ENCODE measurements at regions of chr4 and their contacts with region 1.

Region 1: GRCh38 chr4:81442484-81443085 is 29.1 kb downstream of the RASGEF1B start:
- DNase-seq: peak; percentile 58
- ATAC-seq: peak; percentile 59
- H3K4me3 ChIP-seq: no peak overlapping the region
- H3K27ac ChIP-seq: peak overlapping the region; percentile 95; the same call in 1 of the 2 replicates
- H3K4me1 ChIP-seq: peaks cover 15% of the 10 kb centered on the region
- H3K27me3 ChIP-seq: no peaks in the 10 kb centered on the region
- CTCF ChIP-seq: no peak
- POLR2A ChIP-seq: no peak
- RAD21 ChIP-seq: no peak

Region 2: GRCh38 chr4:81427344-81427821 is 15.2 kb before region 1 on chr4:
- CTCF ChIA-PET with region 1: no interaction called
- POLR2A ChIA-PET with region 1: no interaction called
- dilution Hi-C with region 1: no loop called
- in situ Hi-C with region 1: no loop called
- intact Hi-C with region 1: loop called (anchors 1 kb)
- DNase-seq: peak; percentile 34
- ATAC-seq: peak; percentile 35; the same call in 1 of the 2 replicates
- H3K4me3 ChIP-seq: no peak overlapping the region
- H3K27ac ChIP-seq: peak overlapping the region; percentile 88; the same call in 1 of the 2 replicates
- H3K4me1 ChIP-seq: peaks cover 15% of the 10 kb centered on the region
- H3K27me3 ChIP-seq: no peaks in the 10 kb centered on the region
- CTCF ChIP-seq: no peak
- POLR2A ChIP-seq: no peak
- RAD21 ChIP-seq: no peak

Measured in IMR-90 (cell line).